Common myeloid progenitor, CD34-positive (primary cell): ENCODE measurements at regions of chr19 and their contacts with region 1.

Region 1: GRCh38 chr19:21767065-21767800 is at the start of gene ZNF100:
- DNase-seq: peak; percentile 95 to 98 (median 97)
- H3K4me3 ChIP-seq: peak within 1 kb of the TSS; percentile 90 to 99 (median 96)
- H3K27ac ChIP-seq: peak within 1 kb of the TSS; percentile 87 to 93
- H3K4me1 ChIP-seq: peaks cover 0 to 15% (median 5%) of the 10 kb centered on the region in 4 experiments
- H3K27me3 ChIP-seq: no peaks in the 10 kb centered on the region

Region 2: DNA sequence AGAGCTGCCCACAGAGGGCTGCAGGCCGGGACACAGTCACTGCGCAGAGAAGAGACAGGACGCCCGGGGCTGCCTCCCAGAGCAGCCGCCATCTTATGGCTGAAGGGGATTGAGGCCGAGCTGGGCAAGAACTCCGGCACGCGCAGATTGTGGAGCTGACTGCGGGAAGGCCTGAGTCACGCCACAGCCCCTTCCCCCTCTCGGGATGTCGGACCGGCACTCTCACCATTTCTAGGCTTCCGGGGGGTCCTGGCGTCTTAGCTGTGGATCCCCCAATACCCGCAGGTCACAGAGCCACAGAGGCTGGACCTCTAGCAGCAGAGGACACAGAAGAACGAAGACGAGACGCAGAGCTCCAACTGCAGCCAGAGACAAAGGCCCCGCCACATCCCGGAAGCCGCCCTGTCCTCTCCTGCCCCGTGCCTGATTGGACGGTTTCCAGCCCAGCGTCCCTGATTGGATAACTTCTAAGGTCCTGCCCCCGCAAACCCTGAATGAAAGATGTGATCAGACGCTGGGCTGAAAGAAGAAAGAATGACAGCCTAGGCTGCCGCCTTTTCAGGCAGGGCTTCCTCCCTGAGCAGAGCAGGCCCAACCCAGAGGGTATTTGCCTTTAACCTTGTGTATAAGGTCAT is 68.7 kb after region 1 on chr19 and contains the start of gene ZNF43:
- CTCF ChIA-PET with region 1: no interaction called
- POLR2A ChIA-PET with region 1: interaction called, 12 read pairs
- DNase-seq: peak; percentile 96 to 99 (median 98)
- H3K4me3 ChIP-seq: peak within 1 kb of the TSS; percentile 81 to 94 (median 87)
- H3K27ac ChIP-seq: peak within 1 kb of the TSS; percentile 90 to 92
- H3K4me1 ChIP-seq: peaks cover 0 to 11% (median 6%) of the 10 kb centered on the region in 4 experiments
- H3K27me3 ChIP-seq: no peaks in the 10 kb centered on the region